Right lobe of liver (tissue), 6 donors: ENCODE measurements at regions of chr17 and their contacts with region 1.

Region 1: DNA sequence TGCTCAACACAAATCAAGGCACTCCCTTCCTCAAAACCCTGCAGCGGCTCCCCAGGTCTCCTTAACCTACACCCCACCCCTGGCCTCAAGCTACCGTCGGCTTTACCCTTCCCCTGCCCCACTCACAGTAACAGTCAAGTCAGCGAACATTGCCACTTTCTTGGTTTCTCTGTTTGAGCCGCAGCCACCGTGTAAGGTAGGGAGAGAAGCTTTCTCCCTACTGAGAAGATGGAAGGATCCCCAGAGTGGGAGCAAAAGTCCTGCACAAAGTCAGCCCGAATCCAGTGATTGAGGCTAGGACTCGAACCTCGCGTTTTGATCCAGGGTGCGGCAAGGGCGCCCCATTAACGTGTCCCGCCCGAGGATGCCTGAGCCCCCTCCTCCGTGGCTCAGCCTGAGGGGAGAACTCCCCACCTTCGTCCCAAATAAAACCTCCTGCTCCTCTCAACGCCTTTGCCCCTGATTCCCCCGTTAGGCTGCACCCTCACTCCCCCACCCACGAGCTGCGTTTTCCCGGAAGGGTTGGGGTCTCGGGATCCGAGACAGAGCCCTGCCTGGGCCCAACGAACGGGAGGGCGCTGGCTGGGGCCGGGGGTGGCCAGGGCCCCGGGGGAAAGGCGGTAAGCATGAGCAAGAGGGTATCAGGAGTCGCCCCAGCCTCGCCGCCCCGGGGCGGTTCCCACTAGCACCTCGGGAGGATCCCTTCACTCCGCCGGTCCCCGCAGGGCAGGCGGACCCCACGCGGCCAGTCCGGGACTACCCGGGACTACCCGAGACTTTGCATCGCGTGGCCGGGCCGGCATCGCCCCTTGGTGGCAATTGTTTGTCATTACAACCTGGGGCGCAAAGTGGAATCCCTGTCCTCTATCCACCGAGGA is 9.9 kb upstream of the NAGS start:
- DNase-seq: peak; percentile 71 to 77 (median 73)
- ATAC-seq: peak; percentile 88 to 95 (median 93)
- H3K4me3 ChIP-seq: peak overlapping the region; percentile 25 to 44 (median 39)
- H3K27ac ChIP-seq: no peak overlapping the region
- H3K4me1 ChIP-seq: peaks cover 0 to 11% (median 0%) of the 10 kb centered on the region in 4 donors
- H3K27me3 ChIP-seq: no peaks in the 10 kb centered on the region
- CTCF ChIP-seq: peak; percentile 87 to 94 (median 92)
- POLR2A ChIP-seq: no peak

Region 2: GRCh38 chr17:43900183-43900857 is 94.2 kb before region 1 on chr17:
- intact Hi-C with region 1: loop called in 1 of 2 experiments (anchors 10 kb)
- DNase-seq: peak; percentile 61 to 72 (median 72)
- ATAC-seq: peak; percentile 78 to 94 (median 90)
- H3K4me3 ChIP-seq: peak overlapping the region; percentile 16 to 36 (median 25)
- H3K27ac ChIP-seq: no peak overlapping the region
- H3K4me1 ChIP-seq: no peaks in the 10 kb centered on the region
- H3K27me3 ChIP-seq: no peaks in the 10 kb centered on the region
- CTCF ChIP-seq: no peak
- POLR2A ChIP-seq: no peak

Region 3: GRCh38 chr17:44033861-44034408 is 39.4 kb after region 1 on chr17:
- intact Hi-C with region 1: loop called in 1 of 2 experiments (anchors 5 kb)
- DNase-seq: no peak
- ATAC-seq: no peak
- H3K4me3 ChIP-seq: no peak overlapping the region
- H3K27ac ChIP-seq: no peak overlapping the region
- H3K4me1 ChIP-seq: peaks cover 0 to 9% (median 0%) of the 10 kb centered on the region in 4 donors
- H3K27me3 ChIP-seq: no peaks in the 10 kb centered on the region
- CTCF ChIP-seq: no peak
- POLR2A ChIP-seq: no peak